Transverse colon (tissue), 4 donors: ENCODE measurements at regions of chr9 and their contacts with region 1.

Region 1: DNA sequence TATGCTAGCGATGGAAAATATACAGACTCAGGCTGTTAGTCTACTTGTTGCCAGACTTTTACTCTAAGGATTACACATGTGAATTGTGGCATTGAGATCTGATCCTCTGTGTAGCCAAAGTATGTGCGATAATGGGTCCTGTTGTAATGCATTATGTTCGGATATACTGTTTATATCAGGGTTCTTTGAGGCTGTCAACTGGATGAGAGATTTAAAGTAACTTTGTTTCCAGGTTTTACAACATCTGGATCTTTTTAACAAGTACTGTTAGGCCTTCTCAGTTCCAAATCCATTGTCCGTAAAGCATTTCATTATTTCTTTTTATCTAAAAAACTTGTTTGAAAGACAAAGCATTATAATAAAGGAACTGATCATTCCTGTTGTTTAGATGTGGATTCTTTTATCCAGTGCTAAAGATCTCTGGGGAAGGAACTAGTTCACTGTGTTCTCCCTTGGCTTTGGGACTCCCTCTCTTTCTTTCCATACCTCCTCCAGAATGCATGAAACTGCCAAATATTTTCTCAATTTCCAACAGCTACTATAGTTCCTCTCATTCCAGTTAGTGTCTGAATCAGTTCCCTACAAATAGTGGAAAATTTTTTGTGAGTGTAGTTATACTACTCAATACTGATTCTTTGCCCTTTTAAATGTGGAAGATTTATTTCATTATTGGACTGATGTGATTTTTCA is 68.8 kb downstream of the HACD4 start:
- DNase-seq: no peak
- H3K4me3 ChIP-seq: no peak overlapping the region
- H3K27ac ChIP-seq: no peak overlapping the region
- H3K4me1 ChIP-seq: peaks cover 0 to 6% (median 0%) of the 10 kb centered on the region in 4 donors
- H3K27me3 ChIP-seq: no peaks in the 10 kb centered on the region
- CTCF ChIP-seq: no peak
- EP300 ChIP-seq: no peak
- POLR2A ChIP-seq: no peak

Region 2: GRCh38 chr9:19493174-19493811 is 1469.4 kb before region 1 on chr9:
- in situ Hi-C with region 1: loop called in 1 of 4 experiments (anchors 25 kb)
- intact Hi-C with region 1: no loop called
- DNase-seq: peak; percentile 24
- H3K4me3 ChIP-seq: peak overlapping the region in 1 of 4 donors; percentile 20
- H3K27ac ChIP-seq: peak overlapping the region in 3 of 4 donors; percentile 34 to 47 (median 37)
- H3K4me1 ChIP-seq: peaks cover 0 to 3% (median 0%) of the 10 kb centered on the region in 4 donors
- H3K27me3 ChIP-seq: no peaks in the 10 kb centered on the region
- CTCF ChIP-seq: peak; percentile 53 to 70 (median 63)
- EP300 ChIP-seq: no peak
- POLR2A ChIP-seq: no peak

Region 3: GRCh38 chr9:21096172-21096900 is 133.7 kb after region 1 on chr9:
- in situ Hi-C with region 1: loop called in 1 of 4 experiments (anchors 25 kb)
- intact Hi-C with region 1: no loop called
- DNase-seq: no peak
- H3K4me3 ChIP-seq: peak overlapping the region in 1 of 4 donors; percentile 31
- H3K27ac ChIP-seq: peak overlapping the region; percentile 45 to 69 (median 58)
- H3K4me1 ChIP-seq: peaks cover 0 to 15% (median 2%) of the 10 kb centered on the region in 4 donors
- H3K27me3 ChIP-seq: no peaks in the 10 kb centered on the region
- CTCF ChIP-seq: no peak
- EP300 ChIP-seq: no peak
- POLR2A ChIP-seq: no peak